Psoas muscle (tissue), 8 donors: ENCODE measurements at regions of chr9 and their contacts with region 1.

Region 1: GRCh38 chr9:118586978-118587377 is 782.3 kb downstream of the BRINP1 start:
- DNase-seq: no peak
- ATAC-seq: no peak
- H3K4me3 ChIP-seq: no peak overlapping the region
- H3K27ac ChIP-seq: no peak overlapping the region
- H3K4me1 ChIP-seq: no peaks in the 10 kb centered on the region
- H3K27me3 ChIP-seq: no peaks in the 10 kb centered on the region
- CTCF ChIP-seq: no peak

Region 2: DNA sequence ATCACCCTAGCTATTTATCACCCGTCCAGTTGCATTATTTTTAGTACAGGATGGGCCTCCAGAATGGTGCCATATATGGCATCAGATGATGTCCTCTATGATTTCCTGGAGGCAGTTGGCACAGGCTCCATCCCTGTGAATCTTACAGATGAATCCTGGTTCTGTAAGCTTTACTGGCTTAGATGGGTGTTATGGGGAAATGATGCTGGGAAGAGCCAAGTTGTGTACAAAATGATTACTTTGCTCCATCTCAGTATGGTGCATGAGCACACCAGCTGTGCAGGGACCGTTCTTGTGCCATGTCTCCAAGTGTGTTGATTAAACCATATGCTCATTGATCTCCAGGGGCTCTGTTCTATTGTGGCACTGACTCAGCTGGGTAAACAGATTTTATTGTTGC is 127.1 kb before region 1 on chr9:
- intact Hi-C with region 1: no loop called
- DNase-seq: no peak
- ATAC-seq: peak in 1 of 4 donors; percentile 46
- H3K4me3 ChIP-seq: no peak overlapping the region
- H3K27ac ChIP-seq: no peak overlapping the region
- H3K4me1 ChIP-seq: no peaks in the 10 kb centered on the region
- H3K27me3 ChIP-seq: no peaks in the 10 kb centered on the region
- CTCF ChIP-seq: no peak

Region 3: DNA sequence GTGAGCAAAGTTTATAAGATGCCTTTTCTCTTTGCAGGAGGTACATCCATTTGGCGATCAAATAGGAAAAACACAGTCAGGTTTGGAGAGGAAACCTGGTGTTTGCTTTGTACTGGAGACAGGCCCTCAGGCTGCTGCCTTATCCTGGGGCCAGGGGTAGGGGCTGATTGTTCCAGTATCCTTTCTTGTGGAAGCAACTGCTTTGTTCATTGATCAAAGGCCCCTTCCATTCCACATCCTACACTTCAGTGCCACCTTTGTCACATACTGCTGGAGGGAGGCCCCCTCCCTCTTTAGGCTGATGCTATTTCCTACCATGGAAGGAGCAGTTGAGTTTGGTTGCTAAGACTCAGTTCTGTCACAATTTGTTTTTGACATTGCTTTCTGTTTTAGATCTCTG is 104.7 kb before region 1 on chr9:
- intact Hi-C with region 1: no loop called
- DNase-seq: no peak
- ATAC-seq: no peak
- H3K4me3 ChIP-seq: no peak overlapping the region
- H3K27ac ChIP-seq: no peak overlapping the region
- H3K4me1 ChIP-seq: no peaks in the 10 kb centered on the region
- H3K27me3 ChIP-seq: no peaks in the 10 kb centered on the region
- CTCF ChIP-seq: no peak

Region 4: DNA sequence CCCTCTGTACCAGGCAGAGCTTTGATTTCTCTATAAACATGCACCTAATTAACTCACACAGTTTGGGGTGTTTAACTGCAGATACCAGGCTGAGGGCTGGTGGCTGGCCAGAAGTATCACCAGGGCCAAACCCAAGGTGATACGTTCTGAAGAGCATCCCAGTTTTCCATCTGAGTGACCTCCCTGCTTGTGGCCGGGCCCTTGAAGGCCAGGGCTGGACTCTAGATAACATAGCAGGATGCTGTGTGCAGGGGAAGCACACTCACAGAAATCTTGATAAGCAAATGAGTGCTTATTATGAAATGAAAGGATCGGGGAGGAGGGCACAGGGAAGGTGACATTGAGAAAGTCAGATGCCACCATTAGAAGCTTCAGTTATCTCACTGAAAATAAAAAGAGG is 199.9 kb after region 1 on chr9:
- intact Hi-C with region 1: no loop called
- DNase-seq: no peak
- ATAC-seq: no peak
- H3K4me3 ChIP-seq: no peak overlapping the region
- H3K27ac ChIP-seq: no peak overlapping the region
- H3K4me1 ChIP-seq: no peaks in the 10 kb centered on the region
- H3K27me3 ChIP-seq: peaks cover 0 to 3% (median 0%) of the 10 kb centered on the region in 3 donors
- CTCF ChIP-seq: no peak

Region 5: DNA sequence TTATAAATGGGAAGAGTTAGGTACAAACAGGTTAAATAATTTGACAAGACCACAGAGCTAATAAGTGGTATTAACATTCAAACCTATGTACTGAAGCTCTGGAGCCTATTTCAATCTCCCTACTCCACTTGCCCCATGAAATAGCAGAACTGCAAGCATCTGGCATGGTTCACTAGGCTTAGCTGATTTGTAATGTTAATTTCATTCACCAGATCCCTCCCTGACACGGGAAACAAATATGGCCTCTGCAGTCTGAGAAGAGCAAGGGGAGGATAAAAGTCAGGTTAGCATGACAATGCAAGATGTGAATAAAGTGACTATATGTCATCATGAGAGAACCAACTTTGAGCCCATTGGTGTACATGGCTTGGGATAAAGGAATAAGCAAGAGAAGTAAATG is 353.5 kb after region 1 on chr9:
- intact Hi-C with region 1: loop called in 1 of 2 experiments (anchors 10 kb)
- DNase-seq: no peak
- ATAC-seq: no peak
- H3K4me3 ChIP-seq: no peak overlapping the region
- H3K27ac ChIP-seq: no peak overlapping the region
- H3K4me1 ChIP-seq: no peaks in the 10 kb centered on the region
- H3K27me3 ChIP-seq: no peaks in the 10 kb centered on the region
- CTCF ChIP-seq: no peak